ENCODE measurements at regions of chr11 and their contacts with region 1.

Region 1: GRCh38 chr11:15101072-15101709 is 13.5 kb upstream of the INSC start:
- DNase-seq: peak; percentile 86
- H3K4me3 ChIP-seq: no peak overlapping the region
- H3K27ac ChIP-seq: no peak overlapping the region
- H3K4me1 ChIP-seq: peaks cover 0 to 4% (median 0%) of the 10 kb centered on the region in 6 donors
- H3K27me3 ChIP-seq: peaks cover 0 to 38% (median 3%) of the 10 kb centered on the region in 7 donors
- CTCF ChIP-seq: peak; percentile 68 to 94 (median 88)
- POLR2A ChIP-seq: no peak

Region 2: DNA sequence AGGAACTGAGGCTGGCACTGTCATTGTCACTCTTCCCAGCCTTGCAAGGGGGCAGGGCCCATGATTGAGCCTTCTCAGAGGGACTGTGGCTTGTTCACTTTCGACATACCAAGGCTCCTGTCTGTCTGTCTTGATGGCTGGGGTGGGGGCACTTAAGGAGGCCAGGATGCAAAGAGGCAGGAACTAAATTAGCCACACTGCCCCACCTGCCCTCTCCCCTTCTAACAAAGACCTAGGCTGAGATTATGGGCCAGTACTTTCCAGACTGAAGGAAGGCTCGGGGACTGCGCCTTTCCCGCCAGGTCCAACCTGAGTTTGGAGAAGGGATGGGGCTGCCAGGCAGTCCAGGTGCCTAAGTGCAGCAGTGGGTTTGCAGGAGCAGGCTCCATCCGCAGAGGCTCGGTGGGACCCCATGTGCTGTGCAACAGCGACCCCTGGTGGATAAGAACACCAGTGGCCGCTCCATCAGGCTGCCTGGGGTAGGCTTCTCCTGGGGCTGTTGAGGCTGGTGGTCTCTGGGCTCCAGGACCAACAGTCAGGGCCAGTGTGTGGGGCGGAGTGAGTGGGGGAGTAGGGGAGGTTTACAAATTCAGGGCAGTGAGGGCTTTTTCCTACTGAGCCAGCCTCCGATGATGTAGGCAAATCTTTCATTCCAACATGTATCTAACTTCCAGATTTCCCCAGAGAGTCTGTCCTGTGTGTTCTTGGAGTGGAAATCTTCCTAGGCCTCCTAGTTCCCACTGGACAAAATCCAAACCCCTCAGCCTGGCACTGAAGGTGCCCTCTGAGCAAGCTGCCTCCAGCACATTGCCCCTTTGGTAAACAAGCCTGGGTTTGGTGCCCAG is 107.4 kb after region 1 on chr11:
- intact Hi-C with region 1: loop called (anchors 2 kb)
- DNase-seq: peak; percentile 94
- H3K4me3 ChIP-seq: no peak overlapping the region
- H3K27ac ChIP-seq: no peak overlapping the region
- H3K4me1 ChIP-seq: peaks cover 0 to 5% (median 0%) of the 10 kb centered on the region in 6 donors
- H3K27me3 ChIP-seq: peaks cover 0 to 15% (median 0%) of the 10 kb centered on the region in 7 donors
- CTCF ChIP-seq: peak; percentile 79 to 94 (median 89)
- POLR2A ChIP-seq: no peak

Measured in spleen (tissue), 13 donors.